ENCODE measurements at regions of chr13 and their contacts with region 1.

Region 1: DNA sequence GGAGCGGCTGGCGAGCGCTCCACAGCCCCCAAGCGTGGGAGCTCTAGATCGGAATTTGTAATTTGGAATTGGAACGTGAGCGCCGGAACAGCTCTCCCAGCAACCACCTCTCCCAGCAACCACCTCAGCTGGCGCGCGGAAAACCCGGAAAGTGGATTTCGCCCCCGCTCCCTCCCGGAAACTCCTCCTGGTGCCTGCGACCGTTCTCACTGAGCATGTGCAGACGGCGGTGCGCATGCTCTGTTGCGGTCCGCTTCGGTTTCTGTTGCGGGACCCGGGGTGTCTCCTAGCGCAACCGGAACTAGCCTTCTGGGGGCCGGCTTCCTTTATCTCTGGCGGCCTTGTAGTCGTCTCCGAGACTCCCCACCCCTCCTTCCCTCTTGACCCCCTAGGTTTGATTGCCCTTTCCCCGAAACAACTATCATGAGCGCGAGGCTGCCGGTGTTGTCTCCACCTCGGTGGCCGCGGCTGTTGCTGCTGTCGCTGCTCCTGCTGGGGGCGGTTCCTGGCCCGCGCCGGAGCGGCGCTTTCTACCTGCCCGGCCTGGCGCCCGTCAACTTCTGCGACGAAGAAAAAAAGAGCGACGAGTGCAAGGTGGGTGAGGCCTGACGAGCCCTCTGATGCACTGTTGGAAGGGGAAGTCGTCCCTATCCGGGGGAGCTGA is at the start of gene TM9SF2:
- DNase-seq: peak; percentile 98
- total RNA-seq, gene TM9SF2: 61.8 TPM

Region 2: GRCh38 chr13:99548448-99548847 is 47.1 kb after region 1 on chr13:
- intact Hi-C with region 1: no loop called
- DNase-seq: no peak

Region 3: GRCh38 chr13:99606324-99607066 is 105.2 kb after region 1 on chr13:
- intact Hi-C with region 1: loop called (anchors 5 kb)
- DNase-seq: peak; percentile 98

Measured in cardiac septum (tissue), 1 donor.